ENCODE measurements at regions of chr18 and their contacts with region 1.

Region 1: DNA sequence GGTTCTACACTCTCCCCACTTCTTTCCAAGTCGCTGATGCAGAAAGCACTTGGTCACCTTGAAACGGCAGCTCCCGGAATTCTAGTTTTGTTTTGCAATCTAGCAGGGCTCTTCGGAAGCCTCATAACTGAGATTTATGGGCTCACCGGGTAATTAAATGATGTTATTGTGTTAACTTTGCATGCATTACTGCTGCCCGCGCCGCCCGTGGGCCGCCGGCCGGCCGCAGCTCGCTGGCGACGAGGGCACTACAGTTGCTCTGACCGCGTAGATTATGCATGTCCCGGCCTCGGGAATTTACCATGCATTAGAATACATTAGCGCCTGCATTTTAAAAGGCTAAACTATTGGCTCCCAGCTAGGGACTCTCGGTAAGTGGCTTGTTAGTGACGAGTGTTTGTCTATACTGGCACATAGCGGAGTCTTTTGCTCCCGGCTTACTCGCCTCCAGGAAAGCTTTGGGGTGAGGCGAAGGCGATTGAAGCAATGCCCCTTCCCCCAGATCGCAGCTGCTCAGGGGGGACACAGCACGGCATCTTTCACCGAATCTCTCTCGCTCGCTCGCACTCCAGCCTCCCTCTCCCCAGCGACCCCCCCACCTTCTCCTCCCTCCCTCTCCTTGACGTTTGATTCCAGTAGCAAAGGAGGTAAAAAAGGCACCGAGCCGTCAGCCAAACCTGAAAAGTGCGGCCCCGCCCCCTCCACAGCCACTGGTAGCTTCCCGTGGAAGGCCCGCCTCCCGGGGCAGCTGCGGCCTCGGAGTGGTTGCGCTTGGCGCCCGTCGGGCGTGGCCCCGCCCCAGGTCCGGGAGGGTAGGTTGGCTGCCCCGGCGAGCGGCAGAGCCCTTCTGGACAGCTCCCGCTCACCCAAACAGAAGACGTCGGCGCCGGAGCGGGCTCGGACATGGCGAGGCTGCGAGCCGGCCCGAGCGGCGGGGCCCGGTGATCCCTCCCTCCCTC is at the start of gene ONECUT2:
- DNase-seq: peak; percentile 95 to 96
- ATAC-seq: peak; percentile 93
- H3K4me3 ChIP-seq: peak within 1 kb of the TSS; percentile 37 to 65
- H3K27ac ChIP-seq: no peak within 1 kb of the TSS
- H3K4me1 ChIP-seq: no peaks in the 10 kb centered on the region
- H3K27me3 ChIP-seq: peaks cover 0 to 3% of the 10 kb centered on the region in 2 donors
- total RNA-seq, gene ONECUT2: 0.32 to 0.69 TPM

Region 2: GRCh38 chr18:57497372-57498294 is 62.8 kb after region 1 on chr18:
- intact Hi-C with region 1: loop called in 1 of 2 experiments (anchors 5 kb)
- DNase-seq: no peak
- ATAC-seq: peak; percentile 91
- H3K4me3 ChIP-seq: no peak overlapping the region
- H3K27ac ChIP-seq: no peak overlapping the region
- H3K4me1 ChIP-seq: peaks cover 0 to 8% of the 10 kb centered on the region in 2 donors
- H3K27me3 ChIP-seq: no peaks in the 10 kb centered on the region

Region 3: DNA sequence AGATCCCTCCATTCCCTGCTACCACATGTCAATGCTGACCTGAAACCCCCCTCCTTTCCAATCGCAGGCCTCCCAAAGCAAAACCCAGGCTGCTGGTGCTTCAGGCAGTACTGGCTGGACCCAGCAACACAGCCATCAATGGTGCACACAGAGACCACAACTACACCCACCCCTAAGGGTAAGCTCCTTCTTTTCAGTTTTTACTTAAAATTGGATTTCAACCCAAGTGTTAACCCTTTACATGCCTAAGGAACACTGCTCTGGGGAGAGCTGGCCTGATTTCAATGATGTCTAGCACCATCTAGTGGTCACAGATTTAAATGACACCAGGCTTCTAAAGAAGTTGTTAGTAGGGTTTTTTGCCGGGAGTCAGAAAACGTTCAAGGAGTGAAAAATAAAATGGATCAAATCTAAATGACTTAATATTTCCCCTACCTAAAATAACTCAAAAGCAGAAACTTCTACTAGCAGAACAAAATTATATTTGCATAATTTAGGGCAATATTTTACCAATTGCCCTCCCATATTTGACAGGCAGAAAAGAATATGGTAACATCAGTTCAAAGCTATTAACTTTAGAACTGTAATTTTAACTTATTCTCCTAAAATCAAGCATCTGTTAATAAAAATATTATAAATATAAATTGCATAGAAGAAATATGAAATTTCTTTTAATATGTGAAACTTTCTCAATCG is 127.1 kb after region 1 on chr18:
- intact Hi-C with region 1: loop called in 1 of 2 experiments (anchors 10 kb)
- DNase-seq: no peak
- ATAC-seq: peak; percentile 54
- H3K4me3 ChIP-seq: no peak overlapping the region
- H3K27ac ChIP-seq: no peak overlapping the region
- H3K4me1 ChIP-seq: no peaks in the 10 kb centered on the region
- H3K27me3 ChIP-seq: no peaks in the 10 kb centered on the region

Region 4: GRCh38 chr18:57854726-57855125 is 419.9 kb after region 1 on chr18:
- intact Hi-C with region 1: no loop called
- DNase-seq: no peak
- ATAC-seq: no peak
- H3K4me3 ChIP-seq: no peak overlapping the region
- H3K27ac ChIP-seq: no peak overlapping the region
- H3K4me1 ChIP-seq: no peaks in the 10 kb centered on the region
- H3K27me3 ChIP-seq: no peaks in the 10 kb centered on the region

Measured in aorta (tissue), 5 donors.